ENCODE measurements at regions of chr7 and their contacts with region 1.

Region 1: GRCh38 chr7:27901028-27901760 is 161.2 kb downstream of the TAX1BP1 start:
- DNase-seq: peak; percentile 32
- H3K4me3 Mint-ChIP-seq: no peak overlapping the region
- H3K27ac Mint-ChIP-seq: no peak overlapping the region
- H3K4me1 Mint-ChIP-seq: peaks cover 44% of the 10 kb centered on the region
- H3K27me3 Mint-ChIP-seq: peaks cover 9% of the 10 kb centered on the region

Region 2: DNA sequence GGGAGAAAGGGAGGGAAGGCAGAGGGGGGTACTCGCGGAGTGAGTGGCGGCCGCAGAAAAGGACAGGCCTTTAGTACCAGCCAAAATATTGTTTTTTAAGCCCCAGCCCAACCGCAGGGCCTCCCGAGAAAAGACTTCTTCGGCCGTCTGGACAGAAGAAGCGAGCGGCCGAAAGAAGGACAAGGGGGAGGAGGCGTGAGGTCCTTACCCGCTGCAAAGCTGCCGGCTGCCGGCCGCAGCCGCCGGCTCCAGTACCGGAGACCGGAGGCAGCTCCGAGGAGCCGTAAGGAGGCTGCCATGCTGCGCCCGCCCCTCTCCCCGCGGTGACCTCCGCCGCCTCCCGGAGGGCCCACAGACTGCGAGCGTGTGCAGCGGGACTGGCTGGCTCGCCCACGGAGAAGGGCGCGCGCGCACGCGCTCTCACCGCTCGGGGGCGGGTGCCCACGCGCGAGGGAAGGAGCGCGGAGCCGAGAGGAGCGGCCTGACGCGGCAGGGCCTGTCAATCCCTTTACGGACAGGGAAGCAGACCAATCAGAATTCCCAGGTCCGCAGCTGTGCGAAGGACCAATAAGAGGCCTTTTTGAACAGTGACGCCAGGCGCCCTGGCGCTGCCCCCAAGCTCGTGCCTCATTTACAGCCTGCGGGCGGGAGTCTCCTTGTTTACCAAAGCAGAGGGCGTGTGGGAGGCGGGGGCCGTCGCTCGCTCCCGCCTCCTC is 238.5 kb before region 1 on chr7 and contains the start of gene HIBADH:
- intact Hi-C with region 1: loop called (anchors 1 kb)
- DNase-seq: peak; percentile 96
- H3K4me3 Mint-ChIP-seq: peak within 1 kb of the TSS; percentile 86
- H3K27ac Mint-ChIP-seq: peak within 1 kb of the TSS; percentile 81
- H3K4me1 Mint-ChIP-seq: peaks cover 30% of the 10 kb centered on the region
- H3K27me3 Mint-ChIP-seq: no peaks in the 10 kb centered on the region
- total RNA-seq, gene HIBADH: 21.0 and 21.2 TPM in 2 replicates

Region 3: GRCh38 chr7:27739909-27740448 is 161.2 kb before region 1 on chr7 and contains the start of gene TAX1BP1:
- intact Hi-C with region 1: loop called (anchors 2 kb)
- DNase-seq: peak; percentile 93
- H3K4me3 Mint-ChIP-seq: peak within 1 kb of the TSS; percentile 92
- H3K27ac Mint-ChIP-seq: peak within 1 kb of the TSS; percentile 98
- H3K4me1 Mint-ChIP-seq: peaks cover 41% of the 10 kb centered on the region
- H3K27me3 Mint-ChIP-seq: peaks cover 2% of the 10 kb centered on the region
- total RNA-seq, gene TAX1BP1: 88.6 and 90.9 TPM in 2 replicates

Region 4: GRCh38 chr7:27890205-27890849 is 10.9 kb before region 1 on chr7:
- intact Hi-C with region 1: loop called (anchors 1 kb)
- DNase-seq: no peak
- H3K4me3 Mint-ChIP-seq: no peak overlapping the region
- H3K27ac Mint-ChIP-seq: no peak overlapping the region
- H3K4me1 Mint-ChIP-seq: peaks cover 7% of the 10 kb centered on the region
- H3K27me3 Mint-ChIP-seq: peaks cover 3% of the 10 kb centered on the region

Region 5: GRCh38 chr7:27917774-27918314 is 16.6 kb after region 1 on chr7:
- intact Hi-C with region 1: no loop called
- DNase-seq: no peak
- H3K4me3 Mint-ChIP-seq: no peak overlapping the region
- H3K27ac Mint-ChIP-seq: no peak overlapping the region
- H3K4me1 Mint-ChIP-seq: no peaks in the 10 kb centered on the region
- H3K27me3 Mint-ChIP-seq: no peaks in the 10 kb centered on the region

Region 6: GRCh38 chr7:27972276-27972675 is 71.1 kb after region 1 on chr7:
- intact Hi-C with region 1: loop called (anchors 2 kb)
- DNase-seq: peak; percentile 11
- H3K4me3 Mint-ChIP-seq: peak overlapping the region; percentile 41
- H3K27ac Mint-ChIP-seq: peak overlapping the region; percentile 12
- H3K4me1 Mint-ChIP-seq: peaks cover 21% of the 10 kb centered on the region
- H3K27me3 Mint-ChIP-seq: no peaks in the 10 kb centered on the region

Measured in activated T-helper 1 cell treated with anti-CD3 and anti-CD28 coated beads, Interleukin-12 subunit alpha, Interleukin-12 subunit beta, Interleukin-2, Interleukin-4 antibody, amounts not matched to agents 30 ng/mL and 10 ng/mL and 1 ng/mL, durations not matched to agents 14 hours and 24 hours and 36 hours (primary cell).